Activated CD8-positive, alpha-beta T cell treated with anti-CD3 and anti-CD28 coated beads for 36 hours (primary cell): ENCODE measurements at regions of chr17 and their contacts with region 1.

Region 1: DNA sequence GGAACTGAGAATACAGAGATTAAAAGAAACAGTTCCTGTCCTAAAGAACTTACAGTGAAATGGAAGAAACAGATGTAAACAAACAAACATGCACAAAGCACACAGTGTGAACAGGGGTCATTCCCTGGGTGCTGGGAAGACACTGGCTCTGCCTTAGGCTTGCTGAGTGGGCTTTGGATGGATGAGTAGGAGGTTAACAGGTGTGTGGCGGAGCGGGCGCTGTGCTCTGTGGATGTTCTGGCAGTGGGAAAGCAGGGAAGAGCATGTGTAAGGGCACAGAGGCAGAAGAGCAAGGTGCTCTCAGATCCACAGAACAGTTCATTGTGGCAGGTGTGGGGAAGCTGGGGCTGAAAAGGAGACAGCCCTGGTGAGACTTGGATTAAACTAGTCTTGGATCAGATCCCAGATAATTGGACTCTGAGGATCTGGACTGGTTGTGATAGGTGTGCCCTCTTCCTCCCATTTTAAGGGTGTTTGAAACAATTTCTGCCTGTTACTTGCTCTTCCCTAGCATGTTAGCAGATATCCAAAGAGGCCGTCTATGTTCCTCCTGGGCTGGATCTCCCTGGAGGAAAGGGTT is 8.1 kb downstream of the HROB start:
- DNase-seq: no peak
- ATAC-seq: no peak
- H3K4me3 Mint-ChIP-seq: no peak overlapping the region
- H3K27ac Mint-ChIP-seq: no peak overlapping the region
- H3K4me1 Mint-ChIP-seq: no peaks in the 10 kb centered on the region
- H3K27me3 Mint-ChIP-seq: no peaks in the 10 kb centered on the region
- CTCF ChIP-seq: no peak

Region 2: DNA sequence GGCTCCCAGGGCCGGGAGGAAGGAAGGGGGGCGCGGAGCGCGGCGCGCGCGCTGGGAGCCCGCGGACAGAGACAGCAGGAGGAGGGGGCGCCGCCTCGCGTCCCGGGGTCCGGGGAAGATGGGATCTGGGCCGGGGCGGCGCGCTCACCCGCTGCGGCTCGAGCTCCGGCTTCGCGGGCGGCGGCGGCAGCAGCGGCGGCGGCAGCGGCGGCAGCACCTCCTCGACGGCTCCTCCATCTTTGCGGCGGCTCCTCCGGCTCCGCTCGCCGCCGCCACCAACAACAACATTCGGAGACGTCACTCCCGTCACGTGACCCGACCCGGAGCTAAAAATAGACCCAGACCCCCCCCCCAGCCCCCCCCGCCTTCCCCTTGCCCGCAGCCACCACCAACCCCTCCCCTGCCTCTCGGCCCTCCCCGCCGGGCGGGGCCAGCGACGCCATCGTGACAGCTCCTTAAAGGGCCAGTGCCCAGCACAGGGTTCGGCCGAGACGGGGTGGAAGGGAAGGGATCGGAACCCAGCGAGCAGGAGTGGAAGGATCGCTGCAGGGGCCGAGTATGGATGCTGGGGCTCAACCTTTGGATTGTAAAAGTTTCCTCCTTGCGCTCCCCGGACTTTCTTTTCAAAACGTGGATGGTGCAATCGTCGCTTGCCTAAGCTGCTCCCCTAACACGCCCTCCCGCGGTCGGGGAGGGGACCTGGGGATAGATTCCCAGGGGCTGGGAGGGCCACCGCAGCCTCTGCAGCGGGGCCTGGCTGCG is 26.3 kb before region 1 on chr17 and contains the start of gene HDAC5:
- CTCF ChIA-PET with region 1: interaction called, 14 read pairs
- POLR2A ChIA-PET with region 1: interaction called, 3 read pairs
- intact Hi-C with region 1: no loop called
- DNase-seq: peak; percentile 97
- ATAC-seq: peak; percentile 97
- H3K4me3 Mint-ChIP-seq: peak within 1 kb of the TSS; percentile 82
- H3K27ac Mint-ChIP-seq: peak within 1 kb of the TSS; percentile 96
- H3K4me1 Mint-ChIP-seq: peaks cover 26% of the 10 kb centered on the region
- H3K27me3 Mint-ChIP-seq: no peaks in the 10 kb centered on the region
- CTCF ChIP-seq: peak; percentile 50
- total RNA-seq, gene HDAC5: 19.1 to 19.3 TPM

Region 3: DNA sequence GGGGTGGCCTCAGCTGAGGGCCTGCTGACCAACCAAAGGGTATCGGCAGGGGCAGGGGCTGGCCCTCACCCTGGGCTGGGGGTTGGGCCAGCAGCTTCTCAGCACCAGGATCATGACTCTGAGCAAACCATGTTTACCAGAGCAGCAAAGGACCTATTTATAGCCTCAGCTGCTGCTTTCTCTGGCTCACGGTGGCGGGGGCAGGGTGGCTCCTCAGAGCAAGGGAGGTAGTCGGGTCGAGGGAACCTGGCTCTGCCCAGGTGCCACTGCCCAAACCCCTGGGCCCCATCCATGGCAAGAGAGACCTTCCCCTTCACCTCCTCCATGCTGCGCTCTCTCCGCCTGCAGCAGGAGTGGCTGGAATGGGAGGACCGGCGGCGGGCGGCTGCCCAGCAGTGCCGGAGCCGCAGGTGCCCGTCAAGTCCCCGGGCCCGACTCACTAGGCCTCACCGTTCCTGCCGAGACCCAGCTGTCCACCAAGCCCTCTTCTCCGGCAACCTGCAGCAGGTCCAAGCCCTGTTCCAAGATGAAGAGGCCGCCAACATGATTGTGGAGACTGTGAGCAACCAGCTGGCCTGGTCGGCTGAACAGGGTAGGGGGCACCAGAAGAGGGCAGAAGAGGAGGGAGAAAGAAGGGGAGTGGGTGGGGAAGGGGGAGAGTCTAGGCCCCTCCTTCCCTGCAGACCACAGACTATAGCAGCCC is 20.8 kb after region 1 on chr17 and contains the start of gene ASB16:
- CTCF ChIA-PET with region 1: interaction called, 15 read pairs
- POLR2A ChIA-PET with region 1: interaction called, 4 read pairs
- intact Hi-C with region 1: no loop called
- DNase-seq: no peak
- ATAC-seq: no peak
- H3K4me3 Mint-ChIP-seq: no peak within 1 kb of the TSS
- H3K27ac Mint-ChIP-seq: no peak within 1 kb of the TSS
- H3K4me1 Mint-ChIP-seq: no peaks in the 10 kb centered on the region
- H3K27me3 Mint-ChIP-seq: no peaks in the 10 kb centered on the region
- CTCF ChIP-seq: no peak
- total RNA-seq, gene ASB16: 0.18 to 0.27 TPM

Region 4: DNA sequence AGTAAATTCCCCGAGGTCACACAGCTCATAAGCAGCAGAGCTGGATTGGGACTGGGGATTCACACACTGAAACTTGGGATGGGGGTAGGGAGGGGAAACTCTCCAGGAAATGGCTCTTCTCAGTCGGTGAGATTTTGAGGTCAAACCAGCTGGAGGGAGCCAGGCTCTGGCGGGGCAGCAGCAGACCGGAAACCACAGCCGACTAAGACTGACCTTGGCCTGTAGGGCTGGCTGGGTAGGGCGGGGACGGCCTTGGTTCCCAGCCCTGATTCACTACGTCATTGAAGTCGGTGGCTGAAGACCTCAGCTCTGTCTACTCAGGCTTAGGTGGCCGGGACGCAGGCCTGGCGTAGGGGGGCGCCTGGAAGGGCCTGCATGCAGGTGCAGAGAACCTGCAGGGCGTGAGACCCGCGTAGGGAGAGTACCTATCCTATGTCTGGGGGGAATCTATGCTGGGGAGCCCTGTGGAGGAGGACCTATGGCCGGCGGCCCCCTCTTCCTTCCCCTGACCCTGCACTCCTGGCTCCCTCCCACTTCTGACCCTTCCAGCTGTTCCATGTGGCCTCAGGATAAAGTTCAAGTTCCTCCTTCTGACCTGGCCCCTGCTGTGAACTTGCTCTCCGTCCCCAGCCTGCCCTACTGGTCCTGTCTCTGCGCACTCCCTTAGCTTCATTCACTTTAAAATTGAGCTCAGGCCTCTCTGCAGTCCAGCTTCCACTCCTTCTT is 130.0 kb after region 1 on chr17:
- CTCF ChIA-PET with region 1: no interaction called
- POLR2A ChIA-PET with region 1: no interaction called
- intact Hi-C with region 1: no loop called
- DNase-seq: peak; percentile 46
- ATAC-seq: peak; percentile 78
- H3K4me3 Mint-ChIP-seq: no peak overlapping the region
- H3K27ac Mint-ChIP-seq: no peak overlapping the region
- H3K4me1 Mint-ChIP-seq: peaks cover 10% of the 10 kb centered on the region
- H3K27me3 Mint-ChIP-seq: no peaks in the 10 kb centered on the region
- CTCF ChIP-seq: no peak